Tibial artery (tissue), 4 donors: ENCODE measurements at regions of chr14 and their contacts with region 1.

Region 1: GRCh38 chr14:39015360-39015961 is 87.6 kb downstream of the SEC23A start:
- DNase-seq: no peak
- H3K4me3 ChIP-seq: no peak overlapping the region
- H3K27ac ChIP-seq: no peak overlapping the region
- H3K4me1 ChIP-seq: no peaks in the 10 kb centered on the region
- H3K27me3 ChIP-seq: no peaks in the 10 kb centered on the region
- CTCF ChIP-seq: peak; percentile 65 to 68

Region 2: GRCh38 chr14:38873941-38874612 is 141.4 kb before region 1 on chr14:
- intact Hi-C with region 1: loop called (anchors 10 kb)
- DNase-seq: no peak
- H3K4me3 ChIP-seq: no peak overlapping the region
- H3K27ac ChIP-seq: no peak overlapping the region
- H3K4me1 ChIP-seq: peaks cover 0 to 17% (median 0%) of the 10 kb centered on the region in 4 donors
- H3K27me3 ChIP-seq: no peaks in the 10 kb centered on the region
- CTCF ChIP-seq: no peak